ENCODE measurements at regions of chr19 and their contacts with region 1.

Region 1: GRCh38 chr19:1074544-1075283 is 7.7 kb downstream of the ARHGAP45 start:
- DNase-seq: peak; percentile 87 to 92 (median 88)
- H3K4me3 ChIP-seq: peak overlapping the region in 2 of 3 experiments; percentile 20 to 63
- H3K4me3 Mint-ChIP-seq: peak overlapping the region in 1 of 2 donors; percentile 39
- H3K27ac ChIP-seq: peak overlapping the region; percentile 33 to 36
- H3K27ac Mint-ChIP-seq: peak overlapping the region in 6 of 7 donors; percentile 6 to 87 (median 60)
- H3K4me1 ChIP-seq: peaks cover 66 to 80% of the 10 kb centered on the region in 2 donors
- H3K4me1 Mint-ChIP-seq: peaks cover 57% of the 10 kb centered on the region
- H3K27me3 ChIP-seq: no peaks in the 10 kb centered on the region
- H3K27me3 Mint-ChIP-seq: peaks cover 0 to 1% (median 0%) of the 10 kb centered on the region in 3 donors
- CTCF ChIP-seq: no peak

Region 2: GRCh38 chr19:1039646-1040475 is 34.9 kb before region 1 on chr19 and contains the start of gene ABCA7:
- intact Hi-C with region 1: loop called (anchors 5 kb)
- DNase-seq: peak; percentile 93 to 96 (median 94)
- H3K4me3 ChIP-seq: peak within 1 kb of the TSS; percentile 51 to 92 (median 73)
- H3K4me3 Mint-ChIP-seq: peak within 1 kb of the TSS; percentile 89 to 98
- H3K27ac ChIP-seq: peak within 1 kb of the TSS; percentile 78 to 79
- H3K27ac Mint-ChIP-seq: peak within 1 kb of the TSS; percentile 89 to 97 (median 95)
- H3K4me1 ChIP-seq: peaks cover 49 to 68% of the 10 kb centered on the region in 2 donors
- H3K4me1 Mint-ChIP-seq: peaks cover 57% of the 10 kb centered on the region
- H3K27me3 ChIP-seq: no peaks in the 10 kb centered on the region
- H3K27me3 Mint-ChIP-seq: peaks cover 0 to 1% (median 0%) of the 10 kb centered on the region in 3 donors
- CTCF ChIP-seq: no peak
- polyA plus RNA-seq, gene ABCA7: 1.7 to 104 (median 7.8) TPM

Region 3: DNA sequence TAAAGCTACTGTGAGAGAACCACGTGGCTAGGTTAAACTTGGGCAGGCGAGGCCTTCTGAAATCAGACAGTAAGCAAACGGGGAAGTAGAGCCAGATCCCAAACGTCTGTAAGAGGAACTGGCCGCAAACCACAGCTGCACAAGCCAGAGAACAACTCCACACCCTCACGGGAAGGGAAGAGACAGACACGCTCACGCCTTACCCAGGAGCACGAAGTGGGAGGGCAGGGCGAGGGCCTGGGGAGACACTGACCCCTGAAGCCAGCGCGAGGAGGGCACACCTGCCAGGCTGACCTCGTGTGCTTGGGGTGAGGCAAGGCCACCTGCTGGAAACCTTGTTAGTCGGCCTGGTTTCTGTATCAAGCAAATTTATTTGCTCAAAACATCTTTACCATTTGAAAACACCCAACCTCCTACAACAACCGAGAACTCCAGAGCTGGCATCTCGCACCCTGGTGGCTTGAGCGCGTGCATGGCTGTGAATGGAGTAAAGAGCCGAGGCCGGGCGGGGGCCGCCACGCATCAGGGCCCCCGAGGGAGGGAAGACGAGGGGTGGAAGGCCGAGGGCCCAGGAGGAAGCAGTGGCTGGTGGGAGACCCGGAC is 13.2 kb after region 1 on chr19:
- intact Hi-C with region 1: loop called in 1 of 2 experiments (anchors 2 kb)
- DNase-seq: peak; percentile 91 to 96 (median 96)
- H3K4me3 ChIP-seq: peak overlapping the region in 1 of 3 experiments; percentile 47
- H3K4me3 Mint-ChIP-seq: peak overlapping the region; percentile 44 to 64
- H3K27ac ChIP-seq: peak overlapping the region; percentile 95 to 97
- H3K27ac Mint-ChIP-seq: peak overlapping the region; percentile 97 to 99 (median 98)
- H3K4me1 ChIP-seq: peaks cover 58 to 77% of the 10 kb centered on the region in 2 donors
- H3K4me1 Mint-ChIP-seq: peaks cover 59% of the 10 kb centered on the region
- H3K27me3 ChIP-seq: no peaks in the 10 kb centered on the region
- H3K27me3 Mint-ChIP-seq: peaks cover 0 to 5% (median 0%) of the 10 kb centered on the region in 3 donors
- CTCF ChIP-seq: no peak